Body of pancreas (tissue), 4 donors: ENCODE measurements at regions of chr10 and their contacts with region 1.

Region 1: GRCh38 chr10:96017191-96017687 is 26.1 kb upstream of the CCNJ start:
- DNase-seq: peak; percentile 36 to 73 (median 52)
- ATAC-seq: peak; percentile 81
- H3K4me3 ChIP-seq: no peak overlapping the region
- H3K27ac ChIP-seq: no peak overlapping the region
- H3K4me1 ChIP-seq: no peaks in the 10 kb centered on the region
- H3K27me3 ChIP-seq: no peaks in the 10 kb centered on the region
- CTCF ChIP-seq: peak; percentile 45 to 83 (median 77)
- POLR2A ChIP-seq: no peak

Region 2: DNA sequence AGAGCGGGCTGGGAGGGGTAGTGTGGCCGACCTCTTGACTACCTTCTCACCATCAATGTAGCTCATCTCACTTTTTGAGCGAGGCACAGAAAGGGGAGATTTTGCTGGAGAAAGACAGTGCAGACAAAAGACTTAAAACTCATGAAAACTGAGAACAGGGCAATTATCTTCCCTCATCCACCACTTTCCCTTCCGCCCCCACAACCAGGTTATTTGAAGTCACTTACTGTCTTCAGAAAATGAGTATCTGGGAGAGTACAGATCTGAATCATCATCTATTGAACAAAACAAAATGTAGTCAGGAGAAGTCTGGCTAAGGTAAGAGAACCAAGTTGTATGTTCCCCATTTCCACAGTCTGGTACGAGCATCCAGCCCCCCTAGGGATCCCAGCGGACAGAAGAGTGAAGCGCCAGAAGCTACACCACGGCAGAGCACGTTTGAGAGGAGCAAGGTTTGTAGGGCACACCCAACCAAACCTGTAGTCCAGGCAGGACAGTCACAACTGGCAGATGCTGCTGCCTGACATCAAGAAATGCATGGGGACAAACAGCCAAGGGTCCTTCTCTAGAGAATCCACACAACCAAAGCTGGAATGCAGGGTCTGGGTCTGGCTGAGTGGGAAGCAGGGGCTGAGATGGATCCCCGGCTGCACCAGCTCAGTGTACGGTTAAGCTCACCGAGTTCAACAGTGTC is 633.1 kb before region 1 on chr10:
- intact Hi-C with region 1: no loop called
- DNase-seq: no peak
- ATAC-seq: no peak
- H3K4me3 ChIP-seq: no peak overlapping the region
- H3K27ac ChIP-seq: no peak overlapping the region
- H3K4me1 ChIP-seq: peaks cover 30% of the 10 kb centered on the region
- H3K27me3 ChIP-seq: no peaks in the 10 kb centered on the region
- CTCF ChIP-seq: no peak
- POLR2A ChIP-seq: no peak

Region 3: DNA sequence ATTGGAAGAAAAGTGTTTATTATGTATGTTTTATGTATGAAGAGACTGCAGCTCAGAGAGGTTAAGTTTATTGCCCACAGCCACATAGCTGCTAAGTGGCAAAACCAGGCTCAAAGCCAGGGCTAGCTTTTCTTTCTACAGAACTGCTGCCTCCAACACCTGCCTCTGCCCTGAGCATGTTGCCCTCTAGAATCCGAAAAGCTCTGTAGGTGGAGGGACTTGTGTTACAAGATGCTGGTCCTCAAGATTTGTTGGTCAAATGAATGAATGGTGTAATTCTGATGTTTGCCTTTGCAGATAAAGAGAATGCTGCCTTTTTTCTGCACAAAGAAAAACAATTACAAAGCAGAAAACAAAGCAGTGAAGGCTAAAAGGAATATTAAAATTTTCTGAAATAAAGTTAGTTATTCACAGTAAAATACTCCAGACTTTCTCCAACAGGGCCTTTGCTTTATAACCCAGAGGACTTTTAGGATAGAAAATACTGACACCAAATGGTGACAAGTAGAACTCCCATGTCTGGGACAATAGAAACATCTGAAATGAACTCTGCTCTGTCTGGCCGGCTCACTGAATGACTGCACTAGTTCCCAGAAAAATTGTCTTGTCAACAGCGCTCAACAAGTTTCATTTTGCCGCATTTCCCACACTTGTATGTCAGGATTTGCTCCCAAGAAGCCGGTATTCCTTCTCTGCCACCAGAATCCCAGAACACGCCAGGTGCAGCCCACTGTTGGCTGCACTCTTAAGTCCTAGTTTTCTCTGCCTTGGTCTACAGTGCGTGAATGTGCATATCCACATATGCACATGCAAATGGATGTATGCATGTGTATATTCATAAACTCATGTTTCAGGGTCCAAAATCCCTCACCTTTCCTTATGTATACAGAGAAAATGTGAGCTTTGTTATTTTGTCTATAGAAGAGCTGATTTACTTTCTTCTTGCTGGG is 276.0 kb after region 1 on chr10:
- intact Hi-C with region 1: loop called (anchors 10 kb)
- DNase-seq: peak; percentile 33 to 45 (median 42)
- ATAC-seq: peak; percentile 91
- H3K4me3 ChIP-seq: no peak overlapping the region
- H3K27ac ChIP-seq: no peak overlapping the region
- H3K4me1 ChIP-seq: peaks cover 6% of the 10 kb centered on the region
- H3K27me3 ChIP-seq: no peaks in the 10 kb centered on the region
- CTCF ChIP-seq: peak; percentile 39 to 87 (median 77)
- POLR2A ChIP-seq: no peak

Region 4: DNA sequence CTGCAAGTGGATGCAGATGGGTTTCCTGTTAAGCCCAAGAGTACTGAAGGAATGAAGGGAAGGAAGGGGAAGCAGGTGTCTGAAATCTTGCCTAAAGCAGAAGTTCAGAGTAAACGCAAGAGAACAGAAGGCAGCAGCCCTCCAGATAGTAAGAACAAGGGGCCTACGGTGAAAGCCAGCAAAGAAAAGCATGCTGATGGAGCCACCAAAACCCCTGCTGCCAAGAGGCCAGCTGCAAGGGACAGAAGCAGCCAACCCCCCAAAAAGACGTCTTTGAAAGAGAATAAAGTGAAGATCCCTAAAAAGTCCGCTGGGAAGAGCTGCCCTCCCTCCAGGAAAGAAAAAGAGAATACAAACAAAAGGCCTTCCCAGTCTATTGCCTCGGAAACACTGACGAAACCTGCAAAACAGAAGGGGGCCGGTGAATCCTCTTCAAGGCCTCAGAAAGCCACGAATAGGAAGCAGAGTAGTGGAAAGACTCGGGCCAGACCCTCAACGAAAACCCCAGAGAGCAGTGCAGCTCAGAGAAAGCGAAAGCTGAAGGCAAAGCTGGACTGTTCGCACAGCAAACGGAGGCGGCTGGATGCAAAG is 967.4 kb after region 1 on chr10:
- intact Hi-C with region 1: no loop called
- DNase-seq: no peak
- ATAC-seq: no peak
- H3K4me3 ChIP-seq: no peak overlapping the region
- H3K27ac ChIP-seq: no peak overlapping the region
- H3K4me1 ChIP-seq: peaks cover 8% of the 10 kb centered on the region
- H3K27me3 ChIP-seq: no peaks in the 10 kb centered on the region
- CTCF ChIP-seq: no peak
- POLR2A ChIP-seq: no peak